Calu3 (cell line): ENCODE measurements at regions of chr4 and their contacts with region 1.

Region 1: GRCh38 chr4:118034053-118034785 is at the start of gene NDST3:
- DNase-seq: peak; percentile 68
- H3K4me3 Mint-ChIP-seq: peak within 1 kb of the TSS; percentile 64
- H3K27ac Mint-ChIP-seq: no peak within 1 kb of the TSS
- H3K4me1 Mint-ChIP-seq: no peaks in the 10 kb centered on the region
- H3K27me3 Mint-ChIP-seq: no peaks in the 10 kb centered on the region
- CTCF ChIP-seq: peak; percentile 36
- total RNA-seq, gene NDST3: 0.12 and 0.15 TPM in 2 replicates

Region 2: GRCh38 chr4:116358588-116359222 is 1675.5 kb before region 1 on chr4:
- CTCF ChIA-PET with region 1: no interaction called
- intact Hi-C with region 1: loop called (anchors 2 kb)
- DNase-seq: peak; percentile 72
- H3K4me3 Mint-ChIP-seq: no peak overlapping the region
- H3K27ac Mint-ChIP-seq: no peak overlapping the region
- H3K4me1 Mint-ChIP-seq: no peaks in the 10 kb centered on the region
- H3K27me3 Mint-ChIP-seq: no peaks in the 10 kb centered on the region
- CTCF ChIP-seq: peak; percentile 29

Region 3: DNA sequence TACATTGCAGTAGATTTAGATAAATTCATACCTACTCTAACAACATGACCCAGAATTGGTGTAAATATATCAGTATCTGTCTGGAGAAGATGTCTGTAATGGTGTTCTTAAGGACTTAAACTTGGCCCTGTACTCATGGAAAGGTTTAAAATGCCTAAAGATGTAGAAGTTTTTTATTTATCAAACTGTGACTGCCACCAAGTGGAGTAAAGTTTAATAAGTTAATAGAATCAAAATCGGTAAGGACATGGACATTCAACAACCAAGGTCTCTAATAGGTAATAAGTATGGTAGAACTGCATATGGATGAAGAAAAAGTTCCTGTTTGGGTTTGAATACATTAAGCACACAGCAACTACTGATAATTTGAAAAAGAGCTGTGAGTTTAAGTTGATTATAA is 473.9 kb before region 1 on chr4:
- CTCF ChIA-PET with region 1: no interaction called
- intact Hi-C with region 1: loop called (anchors 1 kb)
- DNase-seq: no peak
- H3K4me3 Mint-ChIP-seq: no peak overlapping the region
- H3K27ac Mint-ChIP-seq: no peak overlapping the region
- H3K4me1 Mint-ChIP-seq: no peaks in the 10 kb centered on the region
- H3K27me3 Mint-ChIP-seq: no peaks in the 10 kb centered on the region
- CTCF ChIP-seq: no peak

Region 4: DNA sequence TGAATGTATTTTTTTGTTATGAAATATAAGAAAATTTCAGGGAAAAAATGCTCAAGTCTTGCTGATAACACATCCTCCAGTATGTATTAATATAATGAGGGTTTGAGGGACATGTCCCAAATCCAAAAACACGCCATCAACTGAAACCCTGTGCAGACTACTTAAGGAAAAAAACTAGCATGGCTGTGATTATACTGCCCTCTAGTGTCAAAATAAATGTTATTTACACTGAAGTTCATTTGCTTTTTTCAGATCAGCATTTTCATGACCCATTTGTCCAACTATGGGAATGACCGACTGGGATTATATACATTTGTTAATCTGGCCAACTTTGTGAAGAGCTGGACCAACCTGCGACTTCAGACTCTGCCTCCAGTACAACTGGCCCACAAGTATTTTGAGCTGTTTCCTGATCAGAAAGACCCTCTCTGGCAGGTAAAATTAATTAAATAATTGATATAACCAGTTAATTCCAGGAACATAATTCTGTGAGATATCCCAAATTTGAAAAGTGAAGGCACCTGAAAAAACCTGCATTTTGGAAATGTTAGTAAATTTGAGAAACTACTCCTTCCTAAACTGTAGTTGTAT is 190.1 kb after region 1 on chr4:
- CTCF ChIA-PET with region 1: no interaction called
- intact Hi-C with region 1: loop called (anchors 10 kb)
- DNase-seq: no peak
- H3K4me3 Mint-ChIP-seq: no peak overlapping the region
- H3K27ac Mint-ChIP-seq: no peak overlapping the region
- H3K4me1 Mint-ChIP-seq: no peaks in the 10 kb centered on the region
- H3K27me3 Mint-ChIP-seq: no peaks in the 10 kb centered on the region
- CTCF ChIP-seq: peak; percentile 29